ENCODE measurements at regions of chr7 and their contacts with region 1.

Region 1: DNA sequence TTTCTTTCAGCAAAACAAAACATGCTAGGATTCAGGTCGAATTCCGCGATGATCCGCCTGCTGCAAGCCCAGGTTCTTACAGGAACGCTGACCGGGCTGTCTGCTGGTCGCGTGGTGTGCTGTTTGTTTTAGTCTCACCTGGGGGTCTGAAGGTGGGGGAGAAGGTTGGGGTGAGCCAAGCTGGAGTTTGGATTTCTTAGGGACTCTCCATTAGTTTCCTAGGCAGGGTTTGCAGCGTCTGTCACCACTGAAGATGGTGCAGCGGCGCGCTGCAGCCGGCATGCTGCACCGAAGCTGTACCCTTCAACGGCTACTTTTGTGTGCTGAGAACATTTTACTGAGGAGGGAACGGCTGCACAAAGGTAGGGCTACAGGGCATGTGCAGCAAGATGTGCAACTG is 48.7 kb downstream of the GCC1 start:
- ATAC-seq: peak; percentile 22 to 74 (median 48)
- H3K4me3 ChIP-seq: peak overlapping the region; percentile 12 to 27 (median 17)
- H3K27ac ChIP-seq: no peak overlapping the region
- H3K4me1 ChIP-seq: peaks cover 0 to 13% of the 10 kb centered on the region in 2 donors

Region 2: DNA sequence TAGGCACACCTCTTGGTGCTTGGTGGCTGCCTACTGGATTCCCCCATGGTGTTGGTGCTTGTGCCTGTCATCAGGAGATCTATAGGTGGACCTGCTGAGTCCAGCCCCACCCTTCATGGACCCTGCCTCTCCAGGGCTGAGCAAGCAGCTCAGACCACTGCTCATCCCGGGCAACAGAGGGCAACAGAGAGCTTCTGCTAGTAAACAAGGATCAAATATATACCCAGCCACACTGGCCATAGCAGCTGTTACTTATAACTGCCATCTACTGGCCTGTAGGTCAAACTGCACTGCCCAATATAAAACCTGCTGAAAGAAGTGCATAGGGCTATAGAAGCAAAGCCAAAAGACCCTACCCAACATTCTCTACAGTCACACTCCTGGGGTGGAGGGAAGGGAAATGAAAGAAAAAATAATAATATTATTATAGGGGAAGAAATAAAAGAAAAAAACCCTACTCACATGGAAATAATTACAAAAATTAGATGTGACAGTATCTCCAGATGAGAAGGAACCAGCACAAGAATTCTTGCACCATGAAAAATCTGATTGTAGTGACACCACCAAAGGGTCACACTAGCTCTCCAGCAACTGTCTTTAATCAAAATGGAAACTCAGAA is 89.3 kb before region 1 on chr7:
- in situ Hi-C with region 1: loop called in 1 of 9 experiments (anchors 25 kb)
- ATAC-seq: peak in 4 of 8 experiments; percentile 25 to 95 (median 90)
- H3K4me3 ChIP-seq: no peak overlapping the region
- H3K27ac ChIP-seq: no peak overlapping the region
- H3K4me1 ChIP-seq: no peaks in the 10 kb centered on the region